Cardiac septum (tissue), 1 donor: ENCODE measurements at regions of chr18 and their contacts with region 1.

Region 1: GRCh38 chr18:21612125-21612991 is at the start of gene SNRPD1:
- DNase-seq: peak; percentile 95
- total RNA-seq, gene SNRPD1: 24.0 TPM

Region 2: DNA sequence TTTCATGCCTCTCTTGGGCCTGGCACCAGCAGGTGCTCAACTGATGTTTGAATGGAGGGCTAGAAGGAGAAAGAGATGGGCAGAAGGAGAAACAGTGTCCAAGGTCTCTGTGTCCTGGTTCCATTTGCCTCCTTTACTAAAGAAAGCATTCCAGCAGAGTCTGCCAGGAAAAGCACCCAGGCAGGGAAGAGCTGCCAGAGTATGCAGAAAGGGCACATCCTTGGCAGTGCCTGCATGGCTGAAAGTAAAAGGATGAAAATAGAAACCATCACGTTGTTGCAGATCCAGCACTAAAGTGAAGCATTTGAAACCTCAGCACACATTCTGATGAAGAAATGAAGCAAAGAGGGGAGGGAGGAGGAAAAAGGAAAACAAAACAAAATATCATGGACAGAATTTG is 154.0 kb before region 1 on chr18:
- intact Hi-C with region 1: no loop called
- DNase-seq: no peak

Region 3: DNA sequence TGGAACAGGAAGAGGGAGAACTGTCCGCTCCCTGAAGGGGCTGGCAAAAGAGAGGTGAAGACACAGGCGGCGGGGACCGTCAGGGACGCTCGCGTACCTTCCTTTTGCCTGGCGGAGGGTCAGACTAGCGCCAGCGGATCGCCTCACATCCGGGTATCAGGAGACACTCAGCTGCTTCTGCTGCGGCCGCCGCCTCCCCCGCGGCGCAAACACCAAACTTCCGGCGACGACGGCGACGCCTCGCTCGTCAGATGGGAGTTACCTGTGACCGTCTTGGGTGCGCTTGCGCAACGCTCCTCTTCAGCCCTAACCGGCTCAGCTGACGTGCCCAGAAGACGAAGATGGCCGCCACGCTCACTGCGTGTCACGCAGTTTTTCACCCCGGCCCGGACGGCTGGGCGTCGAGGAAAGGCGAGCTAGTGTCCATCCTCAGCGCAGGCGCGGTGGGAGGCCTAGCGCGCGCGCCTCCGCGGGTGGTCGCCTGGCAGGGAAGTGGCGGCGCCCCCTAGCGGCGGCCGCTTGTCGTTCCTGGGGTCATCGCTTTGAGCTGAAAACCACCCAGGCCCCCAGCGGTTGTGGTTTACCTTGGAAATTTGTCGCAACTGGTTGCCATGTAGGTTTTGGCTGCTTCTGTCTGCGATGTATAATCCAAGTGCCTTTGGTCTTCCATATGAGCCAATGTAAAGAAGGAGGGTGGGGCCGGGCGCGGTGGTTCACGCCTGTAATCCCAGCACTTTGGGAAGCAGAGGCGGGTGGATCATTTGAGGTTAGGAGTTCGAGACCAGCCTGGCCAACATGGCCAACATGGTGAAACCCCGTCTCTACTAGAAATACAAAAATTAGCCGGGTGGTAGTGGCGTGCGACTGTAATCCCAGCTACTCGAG is 11.6 kb before region 1 on chr18 and contains the start of gene ESCO1:
- intact Hi-C with region 1: loop called (anchors 1 kb)
- DNase-seq: peak; percentile 98
- total RNA-seq, gene ESCO1: 9.4 TPM

Region 4: DNA sequence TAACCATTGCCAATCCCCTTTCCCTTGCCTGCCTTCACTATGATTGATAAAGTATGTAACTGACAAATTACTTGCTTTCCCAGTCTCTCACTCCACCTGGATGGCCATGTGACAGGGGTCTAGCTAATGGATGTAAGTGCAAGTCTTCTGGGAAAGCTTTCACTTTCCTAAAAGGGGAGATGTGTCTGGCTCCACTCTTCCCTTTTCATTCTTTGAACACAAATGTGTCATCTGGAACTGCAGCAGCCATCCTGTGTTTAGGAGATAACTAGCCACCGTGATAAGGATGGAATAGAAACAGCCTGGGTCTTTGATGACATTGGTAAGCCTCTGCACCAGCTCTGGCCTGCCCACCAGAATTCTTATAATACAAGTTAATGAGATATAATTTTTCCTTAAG is 38.0 kb after region 1 on chr18:
- intact Hi-C with region 1: no loop called
- DNase-seq: no peak

Region 5: GRCh38 chr18:21672521-21673267 is 60.3 kb after region 1 on chr18:
- intact Hi-C with region 1: no loop called
- DNase-seq: no peak

Region 6: GRCh38 chr18:21704603-21705364 is 92.4 kb after region 1 on chr18 and contains the start of gene ABHD3:
- intact Hi-C with region 1: loop called (anchors 10 kb)
- DNase-seq: peak; percentile 98
- total RNA-seq, gene ABHD3: 4.0 TPM

Region 7: GRCh38 chr18:21740724-21741510 is 128.6 kb after region 1 on chr18 and contains the start of gene MIB1:
- intact Hi-C with region 1: loop called (anchors 5 kb)
- DNase-seq: peak; percentile 83
- total RNA-seq, gene MIB1: 29.0 TPM